Activated B cell treated with CpG ODN at 0.5 μM for 24 hours (primary cell): ENCODE measurements at regions of chr11 and their contacts with region 1.

Region 1: DNA sequence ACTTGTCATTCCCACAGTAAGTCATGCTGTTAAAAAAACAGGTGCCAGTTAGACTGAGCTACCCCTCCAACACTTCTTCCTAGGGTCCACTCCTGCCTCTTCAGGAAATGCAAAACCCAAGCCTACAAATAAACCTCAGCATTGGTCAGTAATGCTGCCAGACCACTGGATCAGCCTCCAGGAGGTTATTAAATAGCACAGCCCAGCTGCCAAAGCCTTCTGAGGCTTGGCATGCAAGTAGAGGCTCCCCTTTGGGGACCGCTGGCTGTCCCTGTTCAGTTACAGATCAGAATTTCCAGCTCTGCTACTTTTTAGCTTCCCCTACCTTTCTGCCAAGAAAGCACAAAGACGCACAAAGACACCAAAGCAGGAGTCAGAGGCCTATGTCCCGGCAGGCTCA is 33.3 kb downstream of the ABTB2 start:
- DNase-seq: no peak
- ATAC-seq: no peak
- H3K4me3 Mint-ChIP-seq: no peak overlapping the region
- H3K27ac Mint-ChIP-seq: no peak overlapping the region
- H3K4me1 Mint-ChIP-seq: no peaks in the 10 kb centered on the region
- H3K27me3 Mint-ChIP-seq: peaks cover 2% of the 10 kb centered on the region
- CTCF ChIP-seq: no peak

Region 2: DNA sequence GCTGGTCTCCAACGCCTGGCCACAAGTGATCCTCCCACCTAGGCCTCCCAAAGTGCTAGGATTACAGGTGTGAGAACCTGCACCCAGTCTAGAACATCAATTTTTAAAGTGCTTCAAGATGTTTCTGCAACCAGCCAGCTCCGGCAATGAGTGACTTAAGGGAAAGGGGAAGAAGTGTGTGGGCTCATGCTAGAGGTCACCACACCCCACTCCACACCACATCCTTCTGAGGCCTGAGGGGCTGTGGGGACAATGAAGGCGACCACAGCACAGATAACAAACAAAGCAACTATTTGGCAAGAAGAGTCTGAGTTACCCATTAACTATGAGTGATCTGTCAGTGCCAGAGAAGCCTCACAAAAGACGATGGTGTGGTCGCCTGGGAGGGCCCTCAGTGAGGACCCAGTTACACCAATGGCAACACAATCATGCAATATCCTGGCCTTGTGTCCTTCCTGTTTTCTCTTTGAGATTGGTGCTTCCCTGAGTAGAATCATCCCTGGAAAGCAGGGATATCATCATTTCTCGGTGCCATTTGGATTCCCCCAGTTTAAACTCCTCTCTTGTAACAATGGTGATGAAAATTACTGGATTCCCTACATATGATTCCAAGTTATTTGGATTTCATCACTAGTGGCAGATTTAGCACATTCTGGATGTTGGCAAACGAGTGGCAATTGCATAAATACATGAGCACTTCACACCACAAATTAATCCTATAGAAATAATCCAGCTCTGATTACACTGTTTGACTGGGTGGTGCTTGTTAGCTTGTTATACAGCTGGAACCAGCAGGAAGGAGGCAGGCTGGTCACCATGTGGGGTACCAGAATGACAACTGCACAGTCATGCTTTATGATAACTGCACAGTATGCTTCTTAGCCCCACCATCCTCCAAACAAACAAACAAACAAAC is 14.9 kb after region 1 on chr11:
- CTCF ChIA-PET with region 1: no interaction called
- POLR2A ChIA-PET with region 1: no interaction called
- intact Hi-C with region 1: loop called (anchors 2 kb)
- DNase-seq: no peak
- ATAC-seq: peak; percentile 21
- H3K4me3 Mint-ChIP-seq: no peak overlapping the region
- H3K27ac Mint-ChIP-seq: no peak overlapping the region
- H3K4me1 Mint-ChIP-seq: peaks cover 18% of the 10 kb centered on the region
- H3K27me3 Mint-ChIP-seq: no peaks in the 10 kb centered on the region
- CTCF ChIP-seq: no peak